ENCODE measurements at regions of chr10 and their contacts with region 1.

Region 1: GRCh38 chr10:45476559-45476958 is 102.5 kb downstream of the ALOX5 start:
- DNase-seq: no peak
- ATAC-seq: no peak
- H3K4me3 ChIP-seq: no peak overlapping the region
- H3K27ac ChIP-seq: no peak overlapping the region
- H3K4me1 ChIP-seq: peaks cover 0 to 2% of the 10 kb centered on the region in 2 donors
- H3K27me3 ChIP-seq: no peaks in the 10 kb centered on the region
- CTCF ChIP-seq: no peak

Region 2: GRCh38 chr10:45653454-45653853 is 176.9 kb after region 1 on chr10:
- intact Hi-C with region 1: loop called in 1 of 2 experiments (anchors 5 kb)
- DNase-seq: no peak
- ATAC-seq: no peak
- H3K4me3 ChIP-seq: no peak overlapping the region
- H3K27ac ChIP-seq: no peak overlapping the region
- H3K4me1 ChIP-seq: peaks cover 0 to 9% of the 10 kb centered on the region in 2 donors
- H3K27me3 ChIP-seq: no peaks in the 10 kb centered on the region
- CTCF ChIP-seq: no peak